ENCODE measurements at regions of chr16 and their contacts with region 1.

Region 1: GRCh38 chr16:3173892-3174617 is 13.9 kb upstream of the OR1F1 start:
- DNase-seq: peak; percentile 92
- ATAC-seq: peak; percentile 34
- H3K4me3 Mint-ChIP-seq: peak overlapping the region; percentile 75
- H3K27ac Mint-ChIP-seq: peak overlapping the region; percentile 85
- H3K4me1 Mint-ChIP-seq: peaks cover 25% of the 10 kb centered on the region
- H3K27me3 Mint-ChIP-seq: peaks cover 57% of the 10 kb centered on the region
- CTCF ChIP-seq: peak; percentile 62; the same call in 1 of the 2 replicates

Region 2: GRCh38 chr16:3134564-3135417 is 39.3 kb before region 1 on chr16 and contains the start of gene ZNF213:
- CTCF ChIA-PET with region 1: interaction called, 86 read pairs
- POLR2A ChIA-PET with region 1: interaction called, 3 read pairs
- DNase-seq: peak; percentile 94
- ATAC-seq: peak; percentile 94
- H3K4me3 Mint-ChIP-seq: peak within 1 kb of the TSS; percentile 98
- H3K27ac Mint-ChIP-seq: peak within 1 kb of the TSS; percentile 99
- H3K4me1 Mint-ChIP-seq: peaks cover 17% of the 10 kb centered on the region
- H3K27me3 Mint-ChIP-seq: no peaks in the 10 kb centered on the region
- CTCF ChIP-seq: no peak
- total RNA-seq, gene ZNF213: 8.9 to 11.6 TPM (median 10.3 TPM) in 3 replicates

Region 3: GRCh38 chr16:3158471-3159314 is 15.4 kb before region 1 on chr16:
- CTCF ChIA-PET with region 1: interaction called, 95 read pairs
- POLR2A ChIA-PET with region 1: interaction called, 46 read pairs
- DNase-seq: peak; percentile 87
- ATAC-seq: peak; percentile 52
- H3K4me3 Mint-ChIP-seq: peak overlapping the region; percentile 91
- H3K27ac Mint-ChIP-seq: peak overlapping the region; percentile 88
- H3K4me1 Mint-ChIP-seq: peaks cover 6% of the 10 kb centered on the region
- H3K27me3 Mint-ChIP-seq: peaks cover 32% of the 10 kb centered on the region
- CTCF ChIP-seq: no peak

Region 4: DNA sequence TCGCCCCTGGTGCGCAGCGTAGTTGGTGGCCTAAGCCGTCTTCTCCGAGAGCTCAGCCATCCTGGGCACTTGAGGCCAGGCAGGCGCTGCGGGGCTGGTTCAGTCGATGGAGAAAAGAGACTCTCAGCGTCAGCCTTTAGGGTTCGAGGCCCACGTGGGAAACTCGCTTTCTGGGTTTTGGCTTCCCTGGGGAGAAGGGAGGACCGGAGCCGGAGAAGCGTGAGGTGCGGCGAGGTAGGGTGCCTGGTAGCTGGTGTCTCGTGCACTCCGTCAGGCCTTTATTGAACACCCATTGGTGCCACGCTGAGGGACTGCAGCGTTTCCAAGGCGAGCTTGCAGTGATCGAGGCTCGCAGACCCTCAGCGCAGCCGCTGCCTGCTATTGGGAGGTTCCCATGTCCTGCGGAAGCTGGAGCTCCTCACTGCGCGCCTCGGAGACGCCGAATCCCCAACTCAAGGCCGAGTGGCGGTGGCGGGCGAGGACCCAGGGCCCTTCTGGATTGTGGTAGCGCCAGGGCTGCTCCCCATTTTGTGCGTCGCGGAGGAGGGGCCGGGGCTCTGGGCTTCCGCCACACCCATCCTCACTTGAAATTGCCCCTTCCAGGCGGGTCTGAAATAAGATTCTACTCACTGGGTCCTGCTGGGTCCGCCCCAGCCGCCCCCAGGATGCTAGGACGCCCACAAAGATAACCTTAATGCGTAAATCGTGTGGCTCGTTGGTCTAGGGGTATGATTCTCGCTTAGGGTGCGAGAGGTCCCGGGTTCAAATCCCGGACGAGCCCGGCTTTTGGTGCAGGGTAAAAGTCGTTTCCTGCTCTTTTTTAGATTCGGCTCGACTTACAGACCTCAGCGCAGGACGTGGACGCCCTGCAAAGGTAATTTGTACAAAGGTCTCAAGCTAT is 15.1 kb after region 1 on chr16:
- CTCF ChIA-PET with region 1: interaction called, 50 read pairs
- POLR2A ChIA-PET with region 1: interaction called, 5 read pairs
- DNase-seq: peak; percentile 80
- ATAC-seq: peak; percentile 35
- H3K4me3 Mint-ChIP-seq: peak overlapping the region; percentile 97
- H3K27ac Mint-ChIP-seq: no peak overlapping the region; the same call in 1 of the 2 replicates
- H3K4me1 Mint-ChIP-seq: peaks cover 18% of the 10 kb centered on the region
- H3K27me3 Mint-ChIP-seq: peaks cover 61% of the 10 kb centered on the region
- CTCF ChIP-seq: no peak

Region 5: DNA sequence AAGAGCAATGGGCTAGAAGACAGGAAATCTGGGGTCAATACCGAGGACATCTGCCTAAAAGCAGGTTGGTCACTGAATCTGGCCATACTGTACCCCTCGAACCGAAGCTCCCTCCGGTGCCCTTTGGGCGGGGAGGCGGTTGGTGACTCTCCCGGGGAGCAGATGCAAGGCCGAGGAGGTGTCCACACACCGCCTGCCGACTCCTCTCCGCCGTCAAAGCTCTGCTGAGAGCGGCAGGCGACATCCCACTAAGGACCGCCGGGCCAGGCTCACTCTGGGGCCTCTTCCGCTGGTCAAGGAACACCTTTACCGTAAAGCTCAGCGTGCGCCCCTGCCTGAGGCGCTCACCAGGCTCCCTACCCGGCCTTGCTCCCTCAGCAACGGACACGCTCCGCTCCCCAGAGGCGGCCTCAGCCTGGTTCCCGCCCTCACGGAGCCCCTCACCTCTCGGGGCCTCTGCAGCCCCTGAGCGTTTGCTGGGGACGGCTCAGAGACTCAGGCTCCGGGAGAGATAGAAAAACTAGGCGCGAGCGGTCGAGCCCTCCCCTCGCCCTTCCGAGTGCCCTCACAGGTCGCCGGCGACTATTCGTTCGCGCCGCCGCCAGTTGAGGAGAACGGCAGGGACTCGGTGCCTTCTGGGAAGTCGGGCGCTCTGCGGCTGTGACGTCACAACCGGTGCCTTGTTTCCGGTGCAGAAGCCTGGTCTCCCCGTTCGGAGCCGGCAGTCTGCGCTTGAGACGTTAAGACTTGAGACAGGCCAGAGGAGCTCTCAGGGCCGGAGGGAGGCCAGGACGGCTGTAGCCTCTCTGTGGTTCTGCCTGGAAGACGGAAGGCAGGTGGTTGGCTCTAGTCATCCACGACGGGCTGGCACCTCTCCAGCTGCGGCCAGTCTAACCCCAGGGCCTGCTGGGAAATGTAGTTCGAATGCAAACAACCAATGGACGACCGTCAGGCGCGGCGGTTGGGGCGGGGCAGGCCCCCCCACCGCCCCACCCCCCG is 60.8 kb after region 1 on chr16 and contains the start of gene ZNF200:
- CTCF ChIA-PET with region 1: no interaction called
- POLR2A ChIA-PET with region 1: no interaction called
- DNase-seq: peak; percentile 95
- ATAC-seq: peak; percentile 94
- H3K4me3 Mint-ChIP-seq: peak within 1 kb of the TSS; percentile 89
- H3K27ac Mint-ChIP-seq: peak within 1 kb of the TSS; percentile 96
- H3K4me1 Mint-ChIP-seq: peaks cover 7% of the 10 kb centered on the region
- H3K27me3 Mint-ChIP-seq: peaks cover 3% of the 10 kb centered on the region
- CTCF ChIP-seq: no peak
- total RNA-seq, gene ZNF200: 6.8 to 9.7 TPM (median 7.2 TPM) in 3 replicates

Measured in WTC11 (cell line).